Common myeloid progenitor, CD34-positive (primary cell): ENCODE measurements at regions of chr17 and their contacts with region 1.

Region 1: DNA sequence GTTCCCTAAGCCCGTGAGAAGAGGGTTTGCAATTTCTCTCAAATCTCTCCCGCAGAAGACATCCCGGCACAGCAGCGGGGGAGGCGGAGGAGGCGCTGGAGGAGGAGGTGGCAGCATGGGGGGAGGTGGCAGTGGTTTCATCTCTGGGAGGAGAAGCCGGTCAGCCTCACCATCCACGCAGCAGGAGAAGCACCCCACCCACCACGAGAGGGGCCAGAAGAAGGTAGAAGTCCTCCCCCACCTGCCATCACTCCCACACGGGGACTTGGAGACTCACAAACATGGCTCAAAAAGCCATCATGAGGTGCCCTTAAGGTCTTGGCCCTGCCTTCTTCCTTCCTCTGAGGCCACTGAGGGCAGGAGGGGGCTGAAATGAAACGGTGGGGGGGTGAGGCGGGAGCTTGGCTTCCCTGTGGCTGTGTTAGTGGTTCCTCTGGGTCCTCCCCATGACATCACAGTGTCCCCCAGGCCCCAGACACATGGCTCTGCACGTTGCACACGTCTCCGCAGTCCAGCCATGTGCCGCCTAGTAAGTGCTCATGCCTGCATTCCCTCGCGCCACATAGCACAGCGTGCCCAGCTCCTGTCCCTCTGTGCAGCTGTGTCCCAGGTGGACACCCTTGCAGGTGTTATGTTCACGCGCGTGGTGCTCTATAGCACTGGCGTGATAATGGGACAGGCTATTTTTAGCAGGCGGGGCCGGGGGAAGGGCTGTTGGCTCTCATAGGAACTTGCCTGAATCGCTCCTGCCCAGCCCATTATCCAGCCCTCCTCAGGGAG is 6.9 kb downstream of the MLLT6 start:
- DNase-seq: peak in 2 of 3 donors; percentile 63 to 71
- H3K4me3 ChIP-seq: peak overlapping the region in 2 of 7 experiments; percentile 11 to 33
- H3K27ac ChIP-seq: no peak overlapping the region
- H3K4me1 ChIP-seq: peaks cover 0 to 39% (median 31%) of the 10 kb centered on the region in 4 experiments
- H3K27me3 ChIP-seq: no peaks in the 10 kb centered on the region

Region 2: DNA sequence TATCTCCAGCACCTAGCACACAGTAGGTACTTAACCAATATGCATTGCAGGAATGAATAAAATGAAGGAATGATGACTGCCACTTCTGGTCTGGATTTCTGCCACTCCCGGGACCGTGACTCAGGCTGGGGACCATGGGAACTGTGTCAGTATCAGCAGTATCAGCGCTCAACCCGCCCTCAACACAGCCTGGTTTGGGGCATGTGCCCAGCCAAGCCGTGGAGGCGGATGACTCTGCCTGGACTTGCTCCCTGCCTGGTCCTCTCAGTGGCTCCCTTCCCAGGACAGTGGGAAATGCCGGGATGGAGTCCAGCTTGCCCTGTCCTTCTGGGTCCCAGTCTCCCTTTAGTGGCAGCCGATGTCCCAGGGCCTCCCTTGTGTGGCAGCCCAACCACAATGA is 161.3 kb before region 1 on chr17:
- CTCF ChIA-PET with region 1: no interaction called
- POLR2A ChIA-PET with region 1: no interaction called
- DNase-seq: no peak
- H3K4me3 ChIP-seq: no peak overlapping the region
- H3K27ac ChIP-seq: no peak overlapping the region
- H3K4me1 ChIP-seq: peaks cover 0 to 16% (median 11%) of the 10 kb centered on the region in 4 experiments
- H3K27me3 ChIP-seq: peaks cover 0 to 15% (median 7%) of the 10 kb centered on the region in 5 experiments

Region 3: DNA sequence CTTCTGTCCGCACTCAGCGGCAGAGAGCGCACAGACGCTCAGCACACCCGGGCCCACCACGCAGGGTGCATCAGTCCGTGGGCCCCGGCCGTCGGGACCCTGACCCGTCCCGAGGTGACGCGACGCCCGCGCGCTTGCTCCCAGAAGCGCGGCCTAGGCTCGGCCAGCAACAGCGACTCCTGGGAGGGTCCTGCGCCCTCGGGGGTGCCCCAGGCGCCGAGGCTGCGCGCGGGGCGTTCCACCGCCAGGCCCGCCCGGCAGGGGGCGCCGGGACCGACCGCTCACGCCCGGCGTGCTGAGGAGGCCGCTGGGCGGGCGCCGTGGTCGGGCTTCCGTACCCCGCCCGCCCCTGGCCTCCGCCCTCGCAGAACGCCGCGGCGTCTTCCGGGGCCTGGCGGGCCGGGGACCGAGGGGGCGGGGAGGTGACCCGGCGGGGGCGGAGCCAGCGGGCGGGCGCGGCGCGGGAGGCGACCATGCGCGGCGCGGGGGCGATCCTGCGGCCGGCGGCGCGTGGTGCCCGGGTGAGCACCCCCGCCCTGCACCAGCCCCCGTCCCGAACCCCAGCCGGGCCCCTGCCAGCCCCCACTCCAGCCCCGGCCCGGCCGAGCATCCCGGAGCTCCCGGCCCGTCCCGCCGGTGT is 18.0 kb after region 1 on chr17 and contains the start of gene CISD3:
- CTCF ChIA-PET with region 1: interaction called, 25 read pairs
- POLR2A ChIA-PET with region 1: no interaction called
- DNase-seq: peak; percentile 81 to 89 (median 88)
- H3K4me3 ChIP-seq: peak within 1 kb of the TSS; percentile 50 to 82 (median 67)
- H3K27ac ChIP-seq: peak within 1 kb of the TSS in 1 of 2 experiments; percentile 54
- H3K4me1 ChIP-seq: peaks cover 8 to 50% (median 45%) of the 10 kb centered on the region in 4 experiments
- H3K27me3 ChIP-seq: no peaks in the 10 kb centered on the region